H1 (cell line): ENCODE measurements at regions of chr5 and their contacts with region 1.

Region 1: GRCh38 chr5:176629853-176630712 is at the starts of genes EIF4E1B and SNCB:
- DNase-seq: peak in 1 of 2 experiments; percentile 84
- H3K4me3 ChIP-seq: peak within 1 kb of the TSS; percentile 81 to 89 (median 84)
- H3K27ac ChIP-seq: no peak within 1 kb of the TSS
- H3K4me1 ChIP-seq: peaks cover 8 to 34% (median 11%) of the 10 kb centered on the region in 4 experiments
- H3K27me3 ChIP-seq: peaks cover 3 to 40% (median 34%) of the 10 kb centered on the region in 4 experiments
- CTCF ChIP-seq: no peak
- EP300 ChIP-seq: no peak
- POLR2A ChIP-seq: no peak
- RAD21 ChIP-seq: no peak
- total RNA-seq, gene EIF4E1B: 0.63 and 0.97 TPM in 2 replicates
- total RNA-seq, gene SNCB: 5.9 and 6.9 TPM in 2 replicates

Region 2: GRCh38 chr5:176619203-176619568 is 10.9 kb before region 1 on chr5:
- CTCF ChIA-PET with region 1: interaction called, 9 read pairs
- POLR2A ChIA-PET with region 1: interaction called, 19 read pairs
- DNase-seq: peak; percentile 86 to 94
- H3K4me3 ChIP-seq: peak overlapping the region in 3 of 4 experiments; percentile 11 to 54 (median 19); a peak in 4 of 8 replicates
- H3K27ac ChIP-seq: no peak overlapping the region
- H3K4me1 ChIP-seq: peaks cover 0 to 13% (median 6%) of the 10 kb centered on the region in 4 experiments; a peak in 6 of 7 replicates
- H3K27me3 ChIP-seq: peaks cover 9 to 47% (median 26%) of the 10 kb centered on the region in 4 experiments; a peak in 6 of 7 replicates
- CTCF ChIP-seq: peak in 2 of 3 experiments; percentile 61 to 70; a peak in 3 of 4 replicates
- EP300 ChIP-seq: no peak
- POLR2A ChIP-seq: no peak
- RAD21 ChIP-seq: peak; percentile 61 to 78